Pancreas (tissue), 10 donors: ENCODE measurements at regions of chr14 and their contacts with region 1.

Region 1: DNA sequence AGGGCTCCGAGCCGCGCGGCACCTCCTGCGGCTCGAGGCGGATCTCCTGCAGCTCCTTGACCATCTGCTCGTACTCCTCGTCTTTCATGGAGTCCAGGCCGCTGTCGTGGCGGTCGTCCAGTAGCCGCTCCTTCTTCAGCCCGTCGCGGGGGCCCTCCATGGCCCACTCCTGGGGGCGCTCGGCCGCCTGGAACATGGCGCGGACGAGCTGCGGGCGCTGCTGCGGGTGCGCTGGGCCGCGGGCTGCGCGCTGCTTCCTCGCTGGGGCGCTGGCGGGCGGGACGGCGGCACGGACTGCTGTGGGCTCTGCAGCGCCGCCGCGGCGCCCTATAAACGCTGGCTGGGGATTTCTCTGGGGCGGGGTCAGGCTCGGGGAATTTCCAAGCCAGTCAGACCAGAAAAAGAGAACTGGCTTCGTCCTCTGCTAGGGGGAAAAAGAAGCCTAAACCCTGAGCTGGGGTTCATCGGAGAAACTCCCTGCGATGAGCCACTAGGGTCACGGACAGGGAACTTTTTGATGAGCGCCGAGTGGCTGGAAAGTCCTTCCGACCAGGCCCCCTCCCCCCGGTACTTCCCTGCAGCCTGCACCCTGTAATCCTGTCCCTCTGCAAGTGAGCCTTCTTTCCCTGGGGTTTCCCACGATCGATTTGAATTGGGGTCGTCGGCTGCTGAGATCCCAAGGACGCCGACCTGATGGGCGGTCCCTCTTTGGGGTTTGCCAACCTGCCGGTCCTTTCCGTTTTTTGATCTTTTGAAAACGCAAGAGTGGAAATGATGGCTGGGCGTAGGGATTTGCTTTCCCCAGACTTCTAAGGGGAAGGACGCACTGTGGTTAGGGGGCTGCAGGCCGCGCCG is at the start of gene NFKBIA:
- DNase-seq: peak; percentile 86 to 97 (median 94)
- ATAC-seq: peak; percentile 66 to 81 (median 77)
- H3K4me3 ChIP-seq: peak within 1 kb of the TSS; percentile 81 to 92 (median 90)
- H3K27ac ChIP-seq: peak within 1 kb of the TSS; percentile 95 to 99 (median 98)
- H3K4me1 ChIP-seq: peaks cover 8 to 28% (median 14%) of the 10 kb centered on the region in 3 donors
- H3K27me3 ChIP-seq: no peaks in the 10 kb centered on the region
- CTCF ChIP-seq: no peak
- total RNA-seq, gene NFKBIA: 48.2 to 124 (median 60.1) TPM

Region 2: GRCh38 chr14:35341446-35342159 is 63.1 kb before region 1 on chr14:
- intact Hi-C with region 1: loop called in 1 of 3 experiments (anchors 10 kb)
- DNase-seq: peak; percentile 90 to 99 (median 98)
- ATAC-seq: peak; percentile 93 to 98 (median 97)
- H3K4me3 ChIP-seq: peak overlapping the region in 2 of 4 donors; percentile 24 to 33
- H3K27ac ChIP-seq: peak overlapping the region; percentile 90 to 95 (median 93)
- H3K4me1 ChIP-seq: peaks cover 28 to 35% (median 29%) of the 10 kb centered on the region in 3 donors
- H3K27me3 ChIP-seq: no peaks in the 10 kb centered on the region
- CTCF ChIP-seq: no peak